AG04450 (cell line): ENCODE measurements at regions of chr2 and their contacts with region 1.

Region 1: GRCh38 chr2:234981197-234982117 is 29.6 kb downstream of the SH3BP4 start:
- DNase-seq: peak; percentile 97
- H3K4me3 ChIP-seq: peak overlapping the region; percentile 39
- H3K27ac ChIP-seq: peak overlapping the region; percentile 93
- H3K27me3 ChIP-seq: no peaks in the 10 kb centered on the region
- CTCF ChIP-seq: peak; percentile 38

Region 2: DNA sequence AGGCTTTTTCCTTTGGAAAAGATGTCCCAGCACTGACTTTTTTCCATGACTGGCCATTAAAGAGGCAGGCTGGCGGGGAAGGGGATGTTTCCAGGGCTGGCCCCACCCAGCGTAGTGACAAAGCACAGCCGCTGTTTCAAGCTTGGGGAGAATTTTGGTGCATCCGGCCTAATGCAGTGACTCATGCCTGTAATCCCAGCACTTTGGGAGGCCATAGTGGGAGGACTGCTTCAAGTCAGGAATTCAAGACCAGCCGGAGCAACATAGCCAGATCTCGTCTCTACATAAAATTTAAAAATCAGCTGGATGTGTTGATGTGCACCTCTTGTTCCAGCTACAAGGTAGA is 107.7 kb before region 1 on chr2:
- CTCF ChIA-PET with region 1: no interaction called
- POLR2A ChIA-PET with region 1: no interaction called
- DNase-seq: no peak
- H3K4me3 ChIP-seq: no peak overlapping the region
- H3K27ac ChIP-seq: peak overlapping the region; percentile 21
- H3K27me3 ChIP-seq: no peaks in the 10 kb centered on the region
- CTCF ChIP-seq: no peak

Region 3: GRCh38 chr2:234970467-234970866 is 11.0 kb before region 1 on chr2:
- CTCF ChIA-PET with region 1: no interaction called
- POLR2A ChIA-PET with region 1: interaction called, 15 read pairs
- DNase-seq: no peak
- H3K4me3 ChIP-seq: no peak overlapping the region
- H3K27ac ChIP-seq: no peak overlapping the region
- H3K27me3 ChIP-seq: no peaks in the 10 kb centered on the region
- CTCF ChIP-seq: no peak

Region 4: GRCh38 chr2:235170536-235171521 is 189.4 kb after region 1 on chr2:
- CTCF ChIA-PET with region 1: no interaction called
- POLR2A ChIA-PET with region 1: no interaction called
- DNase-seq: peak; percentile 13
- H3K4me3 ChIP-seq: no peak overlapping the region
- H3K27ac ChIP-seq: peak overlapping the region; percentile 39
- H3K27me3 ChIP-seq: peaks cover 4% of the 10 kb centered on the region
- CTCF ChIP-seq: peak; percentile 52